Dendritic cell treated with granulocyte-macrophage colony-stimulating factor and Interleukin-4, amounts not matched to agents 40 ng/mL and 50 ng/mL, for 4 days (primary cell): ENCODE measurements at regions of chr18 and their contacts with region 1.

Region 1: DNA sequence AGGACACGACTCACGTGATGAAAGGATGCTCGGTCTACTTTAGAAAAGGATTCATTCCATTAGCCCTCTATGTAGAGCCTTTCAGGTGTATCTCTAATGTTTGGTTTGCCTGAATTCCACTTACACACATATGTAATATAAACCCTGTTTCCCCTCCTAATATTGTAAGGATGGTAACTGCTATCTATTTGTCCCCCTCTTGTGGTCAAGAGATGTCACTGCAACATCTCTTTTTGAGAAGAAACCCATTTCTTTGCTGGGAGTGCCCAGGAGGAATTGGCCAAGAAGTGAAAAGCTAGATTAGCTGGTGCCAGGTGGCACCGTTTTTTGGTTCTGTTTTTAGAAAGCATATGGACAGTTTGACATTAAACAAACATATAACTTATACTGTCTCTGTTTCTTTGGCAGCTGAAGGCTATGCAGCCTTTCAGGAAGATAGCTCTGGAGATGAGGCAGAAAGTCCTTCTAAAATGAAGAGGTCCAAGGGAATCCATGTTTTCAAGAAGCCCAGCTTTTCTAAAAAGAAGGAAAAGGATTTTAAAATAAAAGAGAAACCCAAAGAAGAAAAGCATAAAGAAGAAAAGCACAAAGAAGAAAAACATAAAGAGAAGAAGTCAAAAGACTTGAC is 41.2 kb downstream of the RALBP1 start:
- H3K4me3 Mint-ChIP-seq: no peak overlapping the region
- H3K27ac Mint-ChIP-seq: no peak overlapping the region
- H3K4me1 Mint-ChIP-seq: peaks cover 16% of the 10 kb centered on the region
- H3K27me3 Mint-ChIP-seq: no peaks in the 10 kb centered on the region

Region 2: GRCh38 chr18:8654503-8655451 is 861.8 kb before region 1 on chr18:
- intact Hi-C with region 1: loop called (anchors 5 kb)
- H3K4me3 Mint-ChIP-seq: no peak overlapping the region
- H3K27ac Mint-ChIP-seq: no peak overlapping the region
- H3K4me1 Mint-ChIP-seq: no peaks in the 10 kb centered on the region
- H3K27me3 Mint-ChIP-seq: peaks cover 17% of the 10 kb centered on the region

Region 3: DNA sequence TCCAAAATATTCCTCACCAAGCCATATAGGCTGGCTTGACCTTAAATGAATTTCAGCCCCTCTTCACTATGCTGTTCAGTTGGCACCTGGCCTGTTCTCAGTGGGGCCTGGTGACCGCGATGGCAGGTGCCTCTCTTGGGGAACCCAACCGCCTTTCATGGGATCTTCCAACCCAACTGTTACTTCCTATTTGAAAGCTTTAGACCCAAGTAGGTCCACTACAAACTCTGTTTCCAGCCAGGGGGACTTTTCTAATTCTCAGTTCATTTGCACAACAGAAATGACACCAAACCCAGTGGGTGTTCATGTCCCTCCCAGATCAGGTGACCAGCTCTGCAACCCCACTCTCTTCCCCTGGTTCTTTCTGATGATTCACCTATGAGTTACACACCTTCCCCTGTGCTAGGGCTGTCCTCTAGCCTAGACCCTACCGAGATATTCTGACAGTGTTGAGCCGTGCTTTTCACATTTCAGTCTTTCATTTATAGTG is 449.7 kb before region 1 on chr18:
- intact Hi-C with region 1: loop called (anchors 2 kb)
- H3K4me3 Mint-ChIP-seq: no peak overlapping the region
- H3K27ac Mint-ChIP-seq: peak overlapping the region; percentile 2
- H3K4me1 Mint-ChIP-seq: peaks cover 70% of the 10 kb centered on the region
- H3K27me3 Mint-ChIP-seq: no peaks in the 10 kb centered on the region

Region 4: DNA sequence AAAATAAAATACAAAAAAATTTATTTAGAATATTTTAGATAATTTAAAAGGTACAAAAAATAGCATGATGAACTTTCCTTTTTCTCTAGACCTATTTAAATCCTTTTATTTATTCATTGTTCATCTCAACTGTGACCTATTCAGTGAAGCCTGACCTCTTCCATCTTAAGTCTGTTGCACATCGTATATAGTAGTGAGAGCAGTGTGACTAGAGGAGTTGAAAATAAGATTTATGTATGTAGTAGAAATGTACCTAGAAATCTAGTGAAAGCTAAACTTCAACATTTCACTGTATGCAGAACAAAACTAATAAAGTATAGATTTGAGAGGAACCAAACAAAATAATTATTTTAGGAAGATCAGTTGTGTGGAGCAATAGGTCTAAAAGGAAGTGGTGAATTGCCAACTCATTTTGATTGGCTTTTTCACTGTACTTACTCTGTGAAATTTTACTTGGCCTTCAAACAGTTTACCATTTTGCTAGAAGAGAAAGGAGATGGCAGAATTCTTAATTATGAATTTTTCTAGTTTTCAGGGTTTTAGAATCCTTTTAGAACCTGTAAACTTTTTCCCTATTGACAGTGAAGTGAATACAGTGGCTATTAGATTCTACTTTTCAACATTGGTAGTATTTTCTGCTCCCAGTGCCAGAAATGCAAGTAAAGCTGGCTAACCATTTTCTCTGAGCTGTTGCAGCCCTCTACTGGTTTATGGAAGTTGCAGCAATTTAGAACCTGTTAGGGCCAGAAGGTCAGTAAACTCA is 368.9 kb before region 1 on chr18:
- intact Hi-C with region 1: loop called (anchors 10 kb)
- H3K4me3 Mint-ChIP-seq: peak overlapping the region; percentile 40
- H3K27ac Mint-ChIP-seq: peak overlapping the region; percentile 78
- H3K4me1 Mint-ChIP-seq: peaks cover 59% of the 10 kb centered on the region
- H3K27me3 Mint-ChIP-seq: no peaks in the 10 kb centered on the region

Region 5: DNA sequence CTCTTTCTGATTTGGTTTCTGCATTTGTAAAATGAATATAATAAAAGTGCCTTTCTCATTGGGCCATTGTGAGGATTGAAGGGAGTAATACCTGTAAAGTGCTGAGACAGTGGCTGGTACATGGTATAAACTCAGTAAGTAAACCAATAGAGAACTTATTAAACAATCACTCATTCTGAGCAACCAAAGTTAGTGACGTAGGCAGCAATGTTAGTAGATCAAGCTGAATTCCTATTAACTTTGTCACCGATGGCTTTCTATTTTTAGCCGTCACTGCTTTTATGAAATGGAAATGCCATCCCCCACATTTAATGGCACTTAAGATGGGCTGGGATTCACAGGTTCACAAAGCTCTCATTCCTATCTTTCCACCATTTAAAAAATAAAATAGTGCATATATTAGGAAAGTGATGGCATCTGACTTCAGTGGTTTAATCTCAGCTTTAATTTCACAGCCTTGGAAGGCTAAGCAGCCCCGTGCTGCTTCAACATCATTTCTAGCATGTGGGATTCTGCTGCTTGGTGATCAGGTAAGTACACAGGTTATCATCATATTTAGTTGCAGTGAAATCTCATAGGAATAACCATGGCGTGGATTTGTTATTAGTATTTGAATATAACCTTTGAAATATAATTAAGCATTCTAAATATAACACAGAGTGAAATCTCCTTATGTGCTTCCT is 115.4 kb after region 1 on chr18:
- intact Hi-C with region 1: no loop called
- H3K4me3 Mint-ChIP-seq: no peak overlapping the region
- H3K27ac Mint-ChIP-seq: no peak overlapping the region
- H3K4me1 Mint-ChIP-seq: no peaks in the 10 kb centered on the region
- H3K27me3 Mint-ChIP-seq: peaks cover 4% of the 10 kb centered on the region